Heart right ventricle (tissue), 16 donors: ENCODE measurements at regions of chr19 and their contacts with region 1.

Region 1: GRCh38 chr19:13277104-13277809 is 127.0 kb downstream of the IER2 start:
- DNase-seq: peak; percentile 29 to 67
- ATAC-seq: peak; percentile 83 to 95 (median 92)
- H3K4me3 ChIP-seq: no peak overlapping the region
- H3K27ac ChIP-seq: peak overlapping the region in 1 of 10 donors; percentile 17
- H3K4me1 ChIP-seq: peaks cover 0 to 9% (median 0%) of the 10 kb centered on the region in 9 donors
- H3K27me3 ChIP-seq: peaks cover 0 to 16% (median 9%) of the 10 kb centered on the region in 7 donors
- CTCF ChIP-seq: peak; percentile 49 to 81 (median 73)

Region 2: DNA sequence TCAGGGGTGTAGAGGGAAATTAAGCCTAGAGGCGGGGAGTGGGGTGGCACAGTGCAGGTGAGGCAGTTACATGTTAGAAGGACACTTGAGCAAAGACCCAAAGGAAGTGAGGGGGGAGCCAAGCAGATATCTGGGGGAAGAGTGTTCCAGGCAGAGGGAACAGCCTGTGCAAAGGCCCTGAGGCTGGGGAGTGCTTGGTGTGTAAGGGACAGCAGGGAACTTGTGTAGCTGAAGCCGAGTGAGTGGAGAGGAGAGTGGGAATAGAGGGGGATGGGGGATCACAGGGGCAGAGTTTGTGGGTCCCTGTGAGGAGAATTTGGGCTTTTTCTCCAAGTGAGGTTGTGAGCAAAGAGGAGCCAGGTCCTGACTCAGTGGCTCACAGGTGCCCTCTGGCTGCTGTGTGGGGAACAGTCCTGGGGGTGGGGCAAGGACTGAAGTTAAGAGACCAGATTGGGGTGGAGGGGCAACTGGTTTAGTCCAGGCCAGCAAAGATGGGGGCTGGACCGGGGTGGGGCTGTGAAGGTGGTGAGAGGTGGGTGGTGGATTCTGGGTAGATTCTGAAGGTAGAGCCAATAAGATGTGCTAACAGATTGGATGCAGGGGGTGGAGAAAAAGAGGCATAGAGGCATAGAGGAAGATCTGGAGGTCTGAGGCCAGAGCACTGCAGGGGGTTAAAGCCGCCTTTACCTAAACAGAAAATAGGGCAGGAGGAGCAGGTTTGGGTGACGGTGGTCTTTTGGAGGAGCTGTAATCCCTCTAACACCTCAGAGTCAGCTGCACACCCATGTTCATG is 153.7 kb after region 1 on chr19:
- intact Hi-C with region 1: loop called in 8 of 10 experiments (anchors 2 to 10 kb)
- DNase-seq: peak; percentile 17 to 35
- ATAC-seq: peak in 3 of 8 donors; percentile 42 to 54 (median 48)
- H3K4me3 ChIP-seq: no peak overlapping the region
- H3K27ac ChIP-seq: no peak overlapping the region
- H3K4me1 ChIP-seq: peaks cover 0 to 5% (median 0%) of the 10 kb centered on the region in 9 donors
- H3K27me3 ChIP-seq: no peaks in the 10 kb centered on the region
- CTCF ChIP-seq: peak in 8 of 9 donors; percentile 33 to 68 (median 58)

Region 3: DNA sequence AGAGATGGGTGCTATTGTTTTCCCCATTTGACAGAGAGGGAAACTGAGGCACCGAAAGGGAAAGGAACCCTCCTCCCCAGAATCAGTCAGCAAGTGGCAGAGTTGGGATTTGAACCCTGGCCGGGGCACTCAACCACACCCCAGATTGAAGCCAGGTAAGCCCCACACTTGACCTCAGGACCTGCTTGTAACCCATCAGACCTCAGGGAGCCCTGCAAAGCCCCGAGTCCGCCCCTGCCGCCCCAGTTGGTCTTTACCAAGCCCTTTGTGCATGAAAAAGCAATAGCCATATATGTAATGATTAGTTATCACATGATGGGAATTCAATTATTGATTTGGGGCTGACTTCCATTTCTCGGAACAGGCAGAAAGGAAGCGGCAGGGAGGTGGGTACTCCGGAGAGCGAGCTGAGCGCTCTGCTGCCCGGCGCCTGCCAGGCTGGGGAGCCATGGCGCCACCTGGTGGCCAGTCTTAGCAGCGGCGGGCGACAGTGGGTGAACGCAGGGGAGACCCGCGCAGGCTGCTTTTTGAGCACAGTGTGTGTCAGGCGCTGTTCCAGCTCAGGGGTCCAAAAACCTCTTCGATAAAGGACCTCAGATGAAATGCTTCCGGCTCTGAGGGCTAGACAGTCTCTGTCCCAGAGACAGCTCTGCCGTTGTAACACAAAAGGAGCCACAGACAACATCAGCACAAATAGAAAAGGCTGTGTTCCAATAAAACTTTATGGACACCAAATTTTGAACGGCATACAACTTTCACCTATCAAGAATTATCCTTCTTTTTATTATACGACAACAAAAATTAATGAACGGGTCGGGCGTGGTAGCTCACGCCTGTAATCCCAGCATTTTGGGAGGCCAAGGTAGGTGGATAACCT is 311.9 kb after region 1 on chr19:
- intact Hi-C with region 1: loop called in 9 of 10 experiments (anchors 1 to 5 kb)
- DNase-seq: peak; percentile 34 to 73
- ATAC-seq: peak; percentile 61 to 90 (median 78)
- H3K4me3 ChIP-seq: no peak overlapping the region
- H3K27ac ChIP-seq: no peak overlapping the region
- H3K4me1 ChIP-seq: peaks cover 0 to 5% (median 0%) of the 10 kb centered on the region in 9 donors
- H3K27me3 ChIP-seq: peaks cover 0 to 64% (median 39%) of the 10 kb centered on the region in 7 donors
- CTCF ChIP-seq: peak; percentile 90 to 99 (median 96)

Region 4: DNA sequence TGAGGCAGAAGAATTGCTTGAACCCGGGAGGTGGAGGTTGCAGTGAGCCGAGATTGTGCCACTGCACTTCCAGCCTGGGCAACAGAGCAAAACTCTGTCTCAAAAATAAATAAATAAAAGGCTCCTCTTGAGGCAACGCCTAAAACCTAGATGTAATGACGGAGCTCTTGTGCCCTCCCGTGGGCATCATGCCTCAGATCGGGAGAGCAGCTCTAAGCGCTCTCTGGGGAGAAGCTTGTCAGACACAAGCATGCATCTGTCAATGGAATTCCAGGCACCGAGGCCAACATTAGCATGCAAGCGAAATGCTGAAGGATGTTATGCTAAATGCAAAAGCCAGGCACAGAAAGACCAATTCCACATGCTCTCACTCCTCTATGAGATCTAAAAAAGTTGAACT is 441.5 kb after region 1 on chr19:
- intact Hi-C with region 1: loop called in 7 of 10 experiments (anchors 5 to 10 kb)
- DNase-seq: peak in 1 of 2 donors; percentile 37
- ATAC-seq: peak in 7 of 8 donors; percentile 60 to 84 (median 80)
- H3K4me3 ChIP-seq: no peak overlapping the region
- H3K27ac ChIP-seq: no peak overlapping the region
- H3K4me1 ChIP-seq: no peaks in the 10 kb centered on the region
- H3K27me3 ChIP-seq: peaks cover 0 to 35% (median 5%) of the 10 kb centered on the region in 7 donors
- CTCF ChIP-seq: peak in 8 of 9 donors; percentile 16 to 62 (median 48)

Region 5: DNA sequence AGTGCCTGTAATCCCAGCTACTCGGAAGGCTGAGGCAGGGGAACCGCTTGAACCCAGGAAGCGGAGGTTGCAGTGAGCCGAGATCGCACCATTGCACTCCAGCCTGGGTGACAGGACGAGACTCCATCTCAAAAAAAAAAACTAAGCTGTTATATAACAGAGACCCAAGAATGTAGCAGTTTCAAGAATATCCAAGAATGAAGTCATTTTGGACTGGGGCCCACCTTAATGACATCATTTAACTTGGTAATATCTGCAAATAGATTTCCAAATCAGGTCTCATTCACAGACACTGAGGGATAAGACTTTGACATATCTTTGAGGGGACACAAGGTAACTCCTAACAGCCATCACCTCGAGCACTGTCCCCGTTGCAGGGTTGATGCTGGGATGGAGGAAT is 450.5 kb after region 1 on chr19:
- intact Hi-C with region 1: loop called in 5 of 10 experiments (anchors 5 to 10 kb)
- DNase-seq: peak in 1 of 2 donors; percentile 60
- ATAC-seq: no peak
- H3K4me3 ChIP-seq: no peak overlapping the region
- H3K27ac ChIP-seq: no peak overlapping the region
- H3K4me1 ChIP-seq: peaks cover 5 to 31% (median 14%) of the 10 kb centered on the region in 9 donors
- H3K27me3 ChIP-seq: no peaks in the 10 kb centered on the region
- CTCF ChIP-seq: no peak